ENCODE measurements at regions of chr3 and their contacts with region 1.

Region 1: DNA sequence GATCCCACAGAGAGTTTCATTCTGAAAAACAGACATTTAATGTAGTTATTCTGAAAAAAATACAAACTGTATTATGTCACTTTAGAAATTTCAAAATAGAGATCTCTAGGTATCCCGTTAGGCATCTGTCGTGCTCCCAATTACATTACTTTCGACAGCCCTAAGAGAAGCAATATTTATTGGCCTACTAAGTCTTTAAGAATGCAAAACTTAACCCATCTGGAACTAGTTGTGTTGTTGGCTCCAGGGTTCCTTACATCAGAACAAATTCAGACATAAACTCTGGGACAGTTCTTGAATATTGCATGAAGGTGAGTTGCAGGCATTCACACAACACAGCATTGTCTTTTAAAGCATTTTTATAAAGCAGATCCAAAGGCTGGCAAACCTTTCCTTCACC is 498.4 kb downstream of the FHIT start:
- DNase-seq: no peak
- H3K4me3 ChIP-seq: no peak overlapping the region
- CTCF ChIP-seq: no peak
- POLR2A ChIP-seq: no peak

Region 2: GRCh38 chr3:60645801-60646200 is 107.0 kb before region 1 on chr3:
- intact Hi-C with region 1: loop called (anchors 5 kb)
- DNase-seq: no peak
- H3K4me3 ChIP-seq: no peak overlapping the region
- CTCF ChIP-seq: no peak
- POLR2A ChIP-seq: no peak